Posterior vena cava (tissue), 2 donors: ENCODE measurements at regions of chr5 and their contacts with region 1.

Region 1: DNA sequence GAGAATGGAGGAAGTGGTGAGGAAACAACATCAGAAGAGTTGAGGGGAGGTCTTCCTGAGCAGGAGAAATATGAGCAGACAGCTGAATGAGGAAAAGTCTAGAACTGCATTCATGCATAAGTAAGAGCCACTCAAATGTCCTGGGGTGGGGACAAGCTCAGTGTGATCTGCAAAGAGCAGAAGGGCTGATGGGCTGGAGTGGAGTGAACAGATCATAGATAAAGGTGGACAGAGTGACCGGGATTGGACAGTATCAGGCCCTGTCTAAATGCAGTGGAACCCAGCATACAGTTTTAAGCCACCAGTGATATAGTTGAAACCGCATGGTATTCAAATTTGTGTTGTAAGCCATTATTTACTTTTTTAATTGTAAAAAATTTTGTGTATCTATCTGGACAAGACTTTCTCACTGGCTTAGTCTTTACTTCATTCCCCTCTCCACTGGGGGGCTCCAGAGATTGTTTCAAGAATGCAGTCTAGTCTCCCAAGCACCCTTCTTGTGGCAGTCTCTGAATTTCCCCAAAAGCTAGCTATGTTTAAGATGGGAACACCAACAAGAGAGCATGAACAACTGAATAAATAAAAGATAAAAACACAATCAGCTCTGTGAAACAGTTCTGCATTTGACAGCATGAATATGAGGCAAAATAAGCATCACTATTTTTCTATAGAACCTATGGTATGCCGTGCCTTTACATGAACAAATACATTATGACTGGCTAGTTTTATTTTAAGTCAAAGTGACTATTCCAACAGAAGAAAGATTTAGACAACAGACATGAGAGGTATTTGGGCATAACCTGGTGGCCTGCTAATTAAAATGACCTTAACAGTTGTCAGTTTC is 10.7 kb upstream of the STK32A start:
- DNase-seq: no peak

Region 2: DNA sequence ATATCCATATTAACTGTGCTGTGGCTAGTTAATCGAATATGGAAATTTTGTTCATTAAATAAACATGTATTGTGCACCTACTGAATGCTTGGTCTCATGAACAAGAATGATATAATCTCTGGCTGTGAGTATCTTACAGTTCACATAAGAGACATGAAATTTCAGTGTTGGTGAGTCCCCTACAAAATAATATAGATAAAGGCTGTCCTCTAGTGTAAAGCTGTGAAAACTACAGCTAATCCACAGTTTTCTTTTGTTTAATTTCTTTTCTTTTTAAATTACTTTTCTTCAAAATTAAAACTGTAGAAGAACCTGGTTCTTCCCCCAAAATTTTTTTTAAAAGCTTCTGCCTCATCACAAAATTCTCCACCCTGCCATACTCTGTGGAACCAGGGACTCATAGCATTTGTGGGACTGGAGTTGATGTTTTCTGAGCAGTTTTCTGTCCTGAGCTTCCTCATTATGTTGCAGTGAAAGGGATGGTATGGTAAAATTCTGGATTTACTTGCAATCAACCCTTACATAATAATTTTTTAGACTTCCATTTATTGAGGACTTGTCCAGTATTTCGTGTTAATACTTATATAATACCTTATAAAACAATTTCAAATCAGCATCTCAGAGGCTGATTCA is 145.7 kb after region 1 on chr5:
- intact Hi-C with region 1: loop called (anchors 10 kb)
- DNase-seq: no peak

Region 3: GRCh38 chr5:147576646-147577535 is 352.7 kb after region 1 on chr5:
- intact Hi-C with region 1: loop called in 1 of 2 experiments (anchors 5 kb)
- DNase-seq: peak; percentile 89